ENCODE measurements at regions of chr1 and their contacts with region 1.

Region 1: DNA sequence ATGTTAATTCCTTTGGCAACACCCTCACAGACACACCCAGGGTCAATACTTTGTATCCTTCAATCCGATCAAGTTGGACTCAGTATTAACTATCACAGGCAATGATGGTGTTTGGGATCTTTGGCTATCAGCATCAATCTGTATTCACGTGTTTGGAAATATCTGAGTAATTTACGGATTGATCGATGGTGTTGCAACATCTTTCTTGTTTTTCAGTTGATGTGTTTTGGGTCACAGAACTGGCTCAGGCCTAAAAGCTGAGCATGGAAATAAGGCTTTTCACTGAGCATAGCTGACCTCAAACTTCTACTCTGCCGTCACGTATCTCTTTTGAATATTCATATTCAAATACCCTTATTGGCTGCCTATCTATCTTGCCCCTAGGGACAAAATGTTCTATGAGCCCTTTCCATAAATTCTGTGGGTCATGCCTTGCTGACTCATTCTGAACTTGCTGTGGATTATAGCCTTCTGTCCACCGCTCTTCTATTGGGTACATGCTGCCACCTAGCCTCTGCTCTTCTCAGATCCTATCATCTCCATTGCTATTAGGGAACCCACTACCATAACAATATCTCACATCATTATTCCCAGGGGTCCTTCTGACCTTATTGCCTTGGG is 156.0 kb downstream of the PDE4B start:
- DNase-seq: peak; percentile 79
- H3K4me3 ChIP-seq: no peak overlapping the region
- H3K27ac ChIP-seq: no peak overlapping the region
- H3K4me1 ChIP-seq: peaks cover 26% of the 10 kb centered on the region
- H3K27me3 ChIP-seq: no peaks in the 10 kb centered on the region

Region 2: GRCh38 chr1:65235867-65236805 is 712.6 kb before region 1 on chr1:
- in situ Hi-C with region 1: loop called (anchors 25 kb)
- DNase-seq: peak; percentile 49
- H3K4me3 ChIP-seq: no peak overlapping the region
- H3K27ac ChIP-seq: no peak overlapping the region
- H3K4me1 ChIP-seq: no peaks in the 10 kb centered on the region
- H3K27me3 ChIP-seq: no peaks in the 10 kb centered on the region

Region 3: DNA sequence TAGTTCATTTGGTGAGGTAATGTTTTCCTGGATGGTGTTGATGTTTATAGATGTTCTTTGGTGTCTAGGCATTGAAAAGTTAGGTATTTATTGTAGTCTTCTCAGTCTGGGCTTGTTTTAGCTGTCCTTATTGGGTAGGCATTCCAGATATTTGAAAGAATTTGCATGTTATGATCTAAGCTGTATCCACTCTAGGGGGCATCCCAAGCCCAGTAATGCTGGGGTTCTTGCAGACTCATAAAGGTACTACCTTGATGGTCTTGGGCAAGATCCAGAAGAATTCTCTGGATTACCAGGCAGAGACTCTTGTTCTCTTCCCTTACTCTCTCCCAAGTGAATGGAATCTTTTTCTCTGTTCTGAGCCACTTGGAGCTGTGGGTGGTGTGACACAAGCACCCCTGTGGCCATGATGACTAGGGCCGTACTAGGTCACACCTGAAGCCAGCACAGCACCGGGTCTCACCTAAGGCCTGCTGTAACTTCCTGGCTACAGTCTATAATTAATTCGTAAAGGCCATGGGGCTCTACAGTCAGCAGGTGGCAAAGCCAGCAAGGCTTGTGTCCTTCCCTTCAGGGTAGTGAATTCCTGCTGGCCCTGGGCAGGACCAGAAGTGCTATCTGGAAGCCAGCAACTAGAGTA is 230.8 kb before region 1 on chr1:
- in situ Hi-C with region 1: loop called (anchors 10 kb)
- DNase-seq: peak; percentile 44
- H3K4me3 ChIP-seq: no peak overlapping the region
- H3K27ac ChIP-seq: no peak overlapping the region
- H3K4me1 ChIP-seq: no peaks in the 10 kb centered on the region
- H3K27me3 ChIP-seq: no peaks in the 10 kb centered on the region

Region 4: DNA sequence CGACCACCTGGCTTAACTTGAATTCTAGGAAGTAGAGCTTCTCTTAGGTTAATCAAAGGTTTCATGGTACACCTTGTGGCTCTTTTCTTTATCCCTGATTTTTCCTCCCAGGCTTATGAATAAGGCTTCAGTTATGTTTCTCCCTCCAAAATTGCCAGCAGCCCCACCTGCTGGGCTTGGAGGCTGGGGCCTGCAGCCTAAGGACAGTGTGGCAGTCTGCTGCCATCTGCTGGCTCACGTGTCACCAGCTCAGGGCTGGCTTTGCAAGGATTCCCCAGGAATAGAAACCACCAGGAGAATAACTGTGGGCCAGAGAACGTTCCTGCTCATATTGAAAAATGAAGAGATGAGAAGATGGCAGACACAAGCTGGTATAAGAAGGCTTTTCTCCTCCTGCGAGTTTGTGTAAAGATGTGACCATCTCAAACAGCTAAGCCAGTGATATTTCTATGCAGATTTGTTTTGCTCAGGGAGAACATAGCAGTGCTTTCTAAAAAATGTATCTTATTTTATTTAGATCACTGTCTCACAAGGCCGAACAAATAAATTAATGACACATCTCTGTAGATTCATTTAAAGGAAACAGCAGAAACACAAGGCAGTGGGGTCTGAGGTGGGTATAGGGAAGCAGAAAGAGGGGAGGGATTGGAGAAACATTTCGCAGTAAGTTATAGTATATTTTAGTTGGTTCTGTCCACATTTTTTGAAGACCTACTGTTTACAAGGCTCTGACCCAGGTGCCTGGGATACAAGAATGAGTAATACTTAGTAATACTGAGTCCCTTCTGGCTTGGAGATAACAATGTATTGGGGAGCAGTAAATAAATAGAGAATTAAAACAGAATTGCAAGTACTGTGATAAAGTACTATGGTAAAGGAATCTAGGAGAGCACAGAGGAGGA is 294.2 kb after region 1 on chr1:
- in situ Hi-C with region 1: loop called (anchors 5 kb)
- DNase-seq: peak; percentile 93
- H3K4me3 ChIP-seq: no peak overlapping the region
- H3K27ac ChIP-seq: peak overlapping the region; percentile 57
- H3K4me1 ChIP-seq: peaks cover 51% of the 10 kb centered on the region
- H3K27me3 ChIP-seq: no peaks in the 10 kb centered on the region

Measured in GM23248 (cell line).